CD4-positive, alpha-beta memory T cell (primary cell): ENCODE measurements at regions of chr18 and their contacts with region 1.

Region 1: GRCh38 chr18:79400091-79400590 is 4.4 kb downstream of the NFATC1 start:
- DNase-seq: peak; percentile 47 to 77 (median 51)
- H3K4me3 ChIP-seq: peak overlapping the region in 1 of 2 donors; percentile 58
- H3K4me3 Mint-ChIP-seq: peak overlapping the region in 2 of 8 donors; percentile 42 to 89
- H3K27ac ChIP-seq: peak overlapping the region; percentile 81
- H3K27ac Mint-ChIP-seq: no peak overlapping the region
- H3K4me1 ChIP-seq: peaks cover 68% of the 10 kb centered on the region
- H3K4me1 Mint-ChIP-seq: peaks cover 31 to 64% (median 50%) of the 10 kb centered on the region in 4 donors
- H3K27me3 ChIP-seq: no peaks in the 10 kb centered on the region
- H3K27me3 Mint-ChIP-seq: peaks cover 0 to 2% of the 10 kb centered on the region in 2 donors

Region 2: DNA sequence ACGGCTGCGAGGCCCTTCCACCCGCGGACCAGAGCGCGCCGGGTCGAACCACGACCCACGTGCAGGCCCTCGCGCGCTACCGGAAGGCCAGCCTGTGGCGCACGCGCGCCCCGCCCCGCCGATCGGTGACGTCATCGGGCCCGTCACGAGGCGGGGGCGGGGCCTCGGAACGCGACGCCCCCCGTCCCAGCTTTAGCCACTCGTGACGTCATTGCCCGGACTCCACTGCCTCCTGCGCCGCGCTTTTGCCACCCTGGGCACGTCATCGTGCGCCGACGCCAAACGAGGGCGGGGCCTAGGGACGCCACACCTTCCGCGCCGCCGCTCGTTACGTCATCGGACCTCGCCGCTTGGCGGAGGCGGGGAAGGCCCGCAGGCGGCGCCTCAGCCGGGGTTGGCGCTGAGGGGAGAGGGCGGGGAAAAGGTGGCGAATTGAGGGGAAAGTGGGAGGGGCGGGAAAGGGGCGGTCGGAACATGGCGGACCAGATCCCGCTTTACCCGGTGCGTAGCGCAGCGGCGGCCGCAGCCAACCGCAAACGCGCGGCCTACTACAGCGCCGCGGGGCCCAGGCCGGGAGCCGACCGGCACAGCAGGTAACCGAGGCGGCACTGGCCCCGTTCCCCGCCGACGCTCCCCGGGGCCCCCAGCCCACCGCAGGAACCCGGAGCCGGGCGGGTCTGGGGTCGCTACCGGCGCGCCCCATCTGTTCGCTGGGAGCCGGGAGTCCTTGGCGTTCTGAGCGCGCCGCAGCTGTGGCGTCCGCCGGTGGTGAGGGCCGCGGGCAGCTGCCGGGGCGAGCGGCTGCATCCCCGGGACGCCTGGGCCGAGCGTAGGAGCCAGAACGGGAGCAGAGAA is 331.0 kb before region 1 on chr18 and contains the start of gene ATP9B:
- CTCF ChIA-PET with region 1: no interaction called
- POLR2A ChIA-PET with region 1: no interaction called
- intact Hi-C with region 1: loop called (anchors 10 kb)
- DNase-seq: peak; percentile 97 to 100 (median 99)
- H3K4me3 ChIP-seq: peak within 1 kb of the TSS; percentile 65 to 69
- H3K4me3 Mint-ChIP-seq: peak within 1 kb of the TSS; percentile 90 to 100 (median 95)
- H3K27ac ChIP-seq: peak within 1 kb of the TSS; percentile 98
- H3K27ac Mint-ChIP-seq: peak within 1 kb of the TSS; percentile 99 to 100 (median 99)
- H3K4me1 ChIP-seq: peaks cover 36% of the 10 kb centered on the region
- H3K4me1 Mint-ChIP-seq: peaks cover 28 to 66% (median 43%) of the 10 kb centered on the region in 4 donors
- H3K27me3 ChIP-seq: no peaks in the 10 kb centered on the region
- H3K27me3 Mint-ChIP-seq: peaks cover 0 to 5% of the 10 kb centered on the region in 2 donors
- total RNA-seq, gene ATP9B: 73.2 to 76.4 TPM

Region 3: DNA sequence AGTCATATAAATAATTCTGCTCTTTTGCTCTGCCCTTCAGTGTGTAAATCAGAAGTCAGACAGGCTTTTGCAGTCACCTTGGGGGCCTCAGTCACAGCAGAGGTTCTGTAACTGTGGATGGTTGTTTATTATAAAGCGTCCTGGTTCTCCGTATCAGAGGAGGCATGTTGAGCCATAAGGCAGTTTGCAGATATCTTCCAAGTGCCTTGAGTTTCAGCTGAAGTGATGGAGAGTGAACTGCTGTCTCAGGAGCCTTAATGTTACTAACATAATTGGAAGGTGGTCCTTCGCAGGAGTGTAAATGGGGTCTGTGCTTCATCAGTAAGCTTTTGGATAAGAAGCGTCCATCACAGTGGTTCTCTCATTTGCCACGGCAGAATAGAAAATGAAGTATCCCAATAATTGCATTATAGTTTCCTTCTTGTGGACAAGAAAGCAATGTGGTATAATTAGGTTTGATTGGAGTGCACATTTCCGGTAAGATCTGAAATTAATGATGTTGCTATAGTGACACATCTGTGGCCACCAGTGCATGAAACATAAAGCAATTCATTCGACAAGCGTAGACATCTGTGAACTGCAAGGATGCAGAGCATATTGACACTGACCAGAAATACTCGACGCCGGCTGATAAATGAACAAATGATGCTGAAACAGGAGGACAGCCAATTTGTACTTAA is 116.9 kb before region 1 on chr18:
- CTCF ChIA-PET with region 1: no interaction called
- POLR2A ChIA-PET with region 1: no interaction called
- intact Hi-C with region 1: no loop called
- DNase-seq: no peak
- H3K4me3 ChIP-seq: no peak overlapping the region
- H3K4me3 Mint-ChIP-seq: peak overlapping the region in 1 of 8 donors; percentile 15
- H3K27ac ChIP-seq: no peak overlapping the region
- H3K27ac Mint-ChIP-seq: peak overlapping the region in 1 of 7 donors; percentile 23
- H3K4me1 ChIP-seq: no peaks in the 10 kb centered on the region
- H3K4me1 Mint-ChIP-seq: no peaks in the 10 kb centered on the region
- H3K27me3 ChIP-seq: no peaks in the 10 kb centered on the region
- H3K27me3 Mint-ChIP-seq: no peaks in the 10 kb centered on the region

Region 4: DNA sequence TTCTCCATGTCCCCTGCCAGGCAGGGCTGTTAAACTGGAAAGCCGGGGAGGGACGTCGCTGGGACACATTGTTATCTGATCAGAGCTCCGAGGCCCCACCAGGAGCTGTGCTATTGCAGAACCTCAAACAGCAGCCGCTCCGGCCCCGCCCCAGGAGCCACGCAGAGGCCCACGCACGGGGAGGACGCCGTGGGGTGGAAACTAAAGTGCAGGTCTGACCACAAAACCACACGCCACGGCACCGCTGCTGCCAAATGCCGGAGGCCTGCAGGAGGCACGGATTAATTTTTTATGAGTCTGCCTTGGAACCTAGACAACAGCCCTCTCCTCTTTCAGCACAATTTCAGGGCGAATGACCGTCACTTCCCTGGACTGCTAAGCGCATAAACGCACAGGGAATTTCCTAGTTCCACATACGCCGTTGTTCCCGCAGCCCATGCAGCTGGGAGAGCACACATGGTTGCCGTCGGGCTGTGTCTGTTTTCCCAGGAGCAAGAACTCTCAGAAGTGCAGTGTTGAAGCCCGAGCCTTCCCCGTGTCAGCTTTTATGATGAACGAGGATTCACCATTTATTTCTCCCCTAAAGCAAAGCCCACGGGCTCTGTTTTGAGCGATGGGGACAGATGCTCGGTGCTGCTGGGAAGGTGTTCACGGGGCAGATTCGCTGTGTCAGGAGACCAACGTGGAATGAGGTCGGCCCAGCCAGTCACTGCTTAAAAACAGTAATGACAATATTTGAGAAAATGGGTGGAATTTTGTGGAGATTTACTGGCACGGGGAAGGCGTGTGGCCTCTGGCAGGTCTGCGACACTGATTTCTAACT is 39.3 kb after region 1 on chr18:
- CTCF ChIA-PET with region 1: interaction called, 6 read pairs
- POLR2A ChIA-PET with region 1: interaction called, 3 read pairs
- intact Hi-C with region 1: loop called (anchors 5 kb)
- DNase-seq: peak; percentile 21 to 54 (median 28)
- H3K4me3 ChIP-seq: no peak overlapping the region
- H3K4me3 Mint-ChIP-seq: peak overlapping the region in 1 of 8 donors; percentile 26
- H3K27ac ChIP-seq: no peak overlapping the region
- H3K27ac Mint-ChIP-seq: peak overlapping the region in 5 of 7 donors; percentile 34 to 78 (median 76)
- H3K4me1 ChIP-seq: peaks cover 27% of the 10 kb centered on the region
- H3K4me1 Mint-ChIP-seq: peaks cover 27 to 70% (median 45%) of the 10 kb centered on the region in 4 donors
- H3K27me3 ChIP-seq: no peaks in the 10 kb centered on the region
- H3K27me3 Mint-ChIP-seq: no peaks in the 10 kb centered on the region

Region 5: DNA sequence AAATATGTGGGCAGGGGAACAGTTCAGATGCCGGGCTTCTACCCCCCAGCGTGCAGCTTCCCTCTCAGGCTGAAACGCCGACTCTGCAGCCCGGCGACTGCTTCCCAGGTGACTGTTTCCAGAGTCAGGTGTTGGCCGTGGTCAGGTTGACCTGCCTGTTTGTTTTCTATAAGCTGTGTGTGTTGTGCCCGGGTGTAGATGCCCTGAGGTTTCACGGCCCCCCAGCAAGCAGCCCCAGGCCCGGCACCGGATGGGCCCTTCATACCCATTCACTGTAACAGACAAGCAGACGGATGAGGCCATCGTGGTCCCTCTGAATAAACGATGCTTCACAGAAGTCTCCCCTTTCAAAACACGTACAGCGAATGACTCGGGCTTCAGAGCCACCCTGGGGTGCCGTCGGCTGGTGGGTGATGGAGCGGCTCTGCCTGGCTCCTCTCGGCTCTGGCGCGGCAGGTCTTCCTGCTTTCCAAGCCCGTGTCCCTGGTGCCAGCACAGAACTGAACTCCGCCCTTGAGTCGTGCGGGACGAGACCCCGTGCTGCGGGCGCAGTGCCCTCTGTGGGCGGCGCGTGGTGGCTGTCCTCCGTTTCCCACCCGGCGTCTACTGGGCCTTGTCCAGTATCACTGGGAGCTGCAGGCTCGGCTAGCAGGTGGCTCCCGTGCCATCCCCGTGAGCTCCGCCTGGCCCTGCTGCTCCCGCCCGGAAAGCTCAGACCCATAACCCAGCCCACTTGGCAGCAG is 382.6 kb after region 1 on chr18:
- CTCF ChIA-PET with region 1: no interaction called
- POLR2A ChIA-PET with region 1: no interaction called
- intact Hi-C with region 1: no loop called
- DNase-seq: no peak
- H3K4me3 ChIP-seq: no peak overlapping the region
- H3K4me3 Mint-ChIP-seq: no peak overlapping the region
- H3K27ac ChIP-seq: no peak overlapping the region
- H3K27ac Mint-ChIP-seq: no peak overlapping the region
- H3K4me1 ChIP-seq: no peaks in the 10 kb centered on the region
- H3K4me1 Mint-ChIP-seq: no peaks in the 10 kb centered on the region
- H3K27me3 ChIP-seq: no peaks in the 10 kb centered on the region
- H3K27me3 Mint-ChIP-seq: peaks cover 10 to 17% of the 10 kb centered on the region in 2 donors